ENCODE measurements at regions of chr22 and their contacts with region 1.

Region 1: GRCh38 chr22:39332441-39333064 is 13.1 kb upstream of the RPL3 start:
- DNase-seq: no peak
- H3K4me3 ChIP-seq: no peak overlapping the region
- CTCF ChIP-seq: no peak

Region 2: GRCh38 chr22:39343259-39344048 is 10.9 kb after region 1 on chr22:
- CTCF ChIA-PET with region 1: interaction called, 18 read pairs
- POLR2A ChIA-PET with region 1: no interaction called
- DNase-seq: no peak
- H3K4me3 ChIP-seq: no peak overlapping the region
- CTCF ChIP-seq: peak; percentile 88

Region 3: GRCh38 chr22:39574779-39575551 is 242.4 kb after region 1 on chr22:
- CTCF ChIA-PET with region 1: no interaction called
- POLR2A ChIA-PET with region 1: no interaction called
- DNase-seq: peak; percentile 23
- H3K4me3 ChIP-seq: no peak overlapping the region
- CTCF ChIP-seq: no peak

Measured in AG04449 (cell line).